ENCODE measurements at regions of chr10 and their contacts with region 1.

Region 1: GRCh38 chr10:89281606-89282395 is 20.0 kb upstream of the IFIT2 start:
- DNase-seq: no peak
- H3K4me3 Mint-ChIP-seq: no peak overlapping the region
- H3K27ac Mint-ChIP-seq: no peak overlapping the region
- H3K4me1 Mint-ChIP-seq: no peaks in the 10 kb centered on the region
- H3K27me3 Mint-ChIP-seq: peaks cover 28% of the 10 kb centered on the region

Region 2: GRCh38 chr10:89301721-89302445 is 20.1 kb after region 1 on chr10 and contains the start of gene IFIT2:
- intact Hi-C with region 1: loop called (anchors 1 kb)
- DNase-seq: peak; percentile 8
- H3K4me3 Mint-ChIP-seq: peak within 1 kb of the TSS; percentile 73
- H3K27ac Mint-ChIP-seq: no peak within 1 kb of the TSS
- H3K4me1 Mint-ChIP-seq: peaks cover 26% of the 10 kb centered on the region
- H3K27me3 Mint-ChIP-seq: peaks cover 40% of the 10 kb centered on the region
- total RNA-seq, gene IFIT2: 0.34 and 0.47 TPM in 2 replicates

Region 3: DNA sequence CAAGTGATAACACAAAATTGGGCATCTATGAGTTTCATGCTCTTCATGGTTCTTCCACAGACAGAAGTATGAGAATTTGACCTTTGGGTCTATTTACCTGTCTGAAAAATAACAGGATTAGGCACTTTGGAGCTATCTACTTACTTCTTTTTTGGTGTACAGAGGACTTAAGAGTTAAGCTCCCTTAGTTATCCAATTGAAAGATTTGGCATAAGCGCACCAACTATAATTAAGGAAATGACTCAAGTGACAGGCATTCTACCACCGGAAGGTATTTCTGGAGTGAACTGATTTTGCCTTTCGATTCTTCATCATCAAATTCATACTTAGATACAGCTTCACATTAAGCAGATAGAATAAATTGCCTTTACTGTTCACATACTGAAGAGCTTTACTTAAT is 176.5 kb after region 1 on chr10:
- intact Hi-C with region 1: no loop called
- DNase-seq: no peak
- H3K4me3 Mint-ChIP-seq: no peak overlapping the region
- H3K27ac Mint-ChIP-seq: no peak overlapping the region
- H3K4me1 Mint-ChIP-seq: no peaks in the 10 kb centered on the region
- H3K27me3 Mint-ChIP-seq: peaks cover 18% of the 10 kb centered on the region

Measured in activated T-helper 1 cell treated with anti-CD3 and anti-CD28 coated beads, Interleukin-12 subunit alpha, Interleukin-12 subunit beta, Interleukin-2, Interleukin-4 antibody, amounts not matched to agents 30 ng/mL and 10 ng/mL and 1 ng/mL, durations not matched to agents 14 hours and 24 hours and 36 hours (primary cell).